ENCODE measurements at regions of chr7 and their contacts with region 1.

Region 1: DNA sequence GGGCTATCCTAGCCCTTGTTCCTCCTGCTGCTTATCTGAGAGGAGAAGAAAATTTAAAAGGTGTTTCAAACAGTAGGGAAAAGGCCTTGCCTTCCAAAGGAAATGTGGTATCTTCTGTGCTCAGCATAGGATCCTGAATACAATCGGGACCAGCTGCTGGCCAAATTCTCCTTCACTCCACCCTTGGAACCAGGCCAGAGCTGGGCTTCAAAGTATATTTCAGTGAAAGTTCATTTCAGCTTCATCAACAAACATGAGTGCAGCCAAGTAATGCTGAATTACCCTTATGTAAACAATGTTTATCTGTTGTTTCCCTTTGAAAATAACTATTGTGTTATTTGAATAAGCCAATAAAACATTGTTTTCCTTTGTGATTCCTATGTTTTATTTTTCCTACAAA is 146.5 kb upstream of the MEOX2 start:
- DNase-seq: peak; percentile 80

Region 2: GRCh38 chr7:15625466-15625865 is 207.5 kb before region 1 on chr7:
- intact Hi-C with region 1: no loop called
- DNase-seq: no peak

Region 3: GRCh38 chr7:16062269-16062668 is 229.3 kb after region 1 on chr7:
- intact Hi-C with region 1: loop called (anchors 5 kb)
- DNase-seq: no peak